Activated naive CD4-positive, alpha-beta T cell treated with anti-CD3 and anti-CD28 coated beads, Interleukin-2, amount 10 ng/mL, durations not matched to agents 7 days and 5 days (primary cell): ENCODE measurements at regions of chr11 and their contacts with region 1.

Region 1: DNA sequence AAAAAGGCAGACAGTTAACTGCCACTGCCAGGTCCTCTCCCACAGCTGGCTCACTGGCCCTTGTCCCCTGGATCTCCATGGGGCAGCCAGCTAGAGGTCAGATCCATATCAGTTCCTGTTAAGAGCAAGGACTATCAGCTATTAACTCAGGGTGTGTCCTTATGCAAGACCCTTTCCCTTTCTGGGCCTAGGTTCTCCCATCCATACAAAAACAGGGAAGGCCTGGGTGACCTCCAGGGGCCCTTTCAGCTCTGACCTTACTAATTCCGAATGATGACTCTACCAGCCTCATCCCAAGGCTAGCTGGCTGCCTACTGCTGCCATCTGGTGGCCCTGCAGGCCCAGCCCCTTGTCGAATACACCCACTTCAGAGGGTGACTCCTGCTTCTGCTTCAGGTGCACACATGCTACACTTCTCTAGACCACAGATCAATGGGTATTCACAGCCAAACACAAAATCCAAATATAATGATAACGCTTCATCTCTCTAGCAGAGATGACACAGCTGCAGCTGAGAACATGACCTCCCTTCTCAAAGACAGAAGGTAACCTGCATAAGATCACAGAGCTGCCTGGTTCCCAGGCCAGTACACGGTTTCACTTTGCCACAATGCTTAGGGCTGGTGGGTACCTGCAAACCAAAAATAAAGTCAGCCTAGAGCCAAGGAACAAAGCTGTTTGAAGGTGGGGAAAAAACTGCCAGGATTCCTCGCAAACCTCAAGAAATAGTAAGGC is 34.1 kb downstream of the SERGEF start:
- DNase-seq: peak; percentile 50
- H3K4me3 Mint-ChIP-seq: no peak overlapping the region
- H3K27ac Mint-ChIP-seq: no peak overlapping the region
- H3K4me1 Mint-ChIP-seq: no peaks in the 10 kb centered on the region
- H3K27me3 Mint-ChIP-seq: no peaks in the 10 kb centered on the region

Region 2: DNA sequence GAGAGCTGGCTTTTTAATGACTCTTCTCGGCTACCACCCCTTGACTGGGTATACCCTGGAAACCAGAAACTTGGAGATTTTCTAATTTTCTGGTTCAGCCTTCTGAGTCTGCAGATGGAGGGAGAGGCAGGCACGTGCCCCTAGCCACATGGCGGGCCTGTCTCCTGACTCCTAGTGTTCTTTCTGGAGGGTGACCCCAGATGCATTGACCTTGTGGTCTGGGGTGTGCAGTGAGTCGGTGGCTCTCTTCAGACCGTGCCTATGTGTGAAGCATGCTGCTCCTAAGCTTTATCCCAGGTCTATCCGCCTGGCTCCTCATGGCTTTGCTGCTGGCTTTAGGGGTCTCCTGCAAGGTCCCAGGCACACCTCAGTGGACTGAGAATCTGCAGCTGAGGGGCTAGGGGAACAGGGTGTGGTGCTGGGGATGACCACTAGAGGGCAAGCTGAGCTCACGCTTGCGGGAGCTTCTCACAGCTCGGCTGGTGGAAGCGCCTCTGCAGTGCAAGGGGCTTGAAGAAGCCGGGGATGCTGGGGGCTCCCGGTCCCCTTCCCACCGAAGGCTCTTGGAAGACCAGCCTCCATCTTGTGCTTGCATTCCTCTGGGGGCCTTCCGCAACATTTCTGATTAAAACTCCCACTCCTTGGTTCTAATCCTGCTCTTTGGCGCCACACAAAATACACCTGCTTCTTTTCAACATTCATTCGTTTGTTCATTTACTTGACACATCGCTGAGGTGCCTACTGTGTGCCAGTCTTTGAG is 379.8 kb before region 1 on chr11:
- CTCF ChIA-PET with region 1: interaction called, 17 read pairs
- DNase-seq: peak; percentile 80
- H3K4me3 Mint-ChIP-seq: no peak overlapping the region
- H3K27ac Mint-ChIP-seq: no peak overlapping the region
- H3K4me1 Mint-ChIP-seq: no peaks in the 10 kb centered on the region
- H3K27me3 Mint-ChIP-seq: peaks cover 35% of the 10 kb centered on the region

Region 3: DNA sequence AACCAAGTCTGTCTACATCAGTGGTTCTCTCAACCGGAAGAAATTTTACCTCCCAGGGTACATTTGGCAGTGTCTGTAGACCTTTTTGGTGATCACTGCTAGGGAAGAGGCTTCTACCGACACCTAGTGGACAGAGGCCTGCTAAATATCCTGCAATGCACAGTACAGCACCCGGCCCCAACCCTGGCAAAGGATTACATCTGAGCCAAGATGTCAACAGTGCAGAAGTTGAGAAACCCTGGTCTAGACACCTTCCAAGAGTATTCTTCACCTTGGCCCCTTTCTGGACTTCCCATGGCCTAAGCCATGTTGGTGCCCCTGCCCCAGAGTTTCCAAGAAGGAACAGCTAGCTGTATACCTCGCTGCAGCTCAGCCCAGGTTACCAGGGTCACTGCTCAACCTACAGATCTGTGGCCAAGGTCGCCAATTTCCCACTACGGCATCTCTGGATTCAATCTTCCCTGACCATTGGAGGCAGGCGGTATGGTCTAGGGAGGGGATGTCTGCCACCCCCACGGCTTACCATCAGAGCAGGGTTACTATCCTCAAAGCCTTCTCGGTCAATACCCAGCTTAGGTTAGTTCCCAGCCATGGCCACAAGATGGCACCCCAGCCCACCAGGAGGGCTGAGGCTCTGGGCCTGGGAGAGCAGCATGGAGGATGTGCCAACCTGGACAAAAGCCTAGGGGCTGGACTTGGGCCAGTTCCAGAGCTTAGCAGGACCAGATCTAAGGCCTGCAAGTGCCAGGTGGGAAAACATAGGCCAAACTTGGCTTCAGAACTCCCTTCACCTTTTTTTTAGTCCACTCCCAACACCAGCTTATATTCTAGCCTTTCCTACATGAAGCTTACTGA is 247.9 kb before region 1 on chr11:
- CTCF ChIA-PET with region 1: interaction called, 84 read pairs
- DNase-seq: peak; percentile 76
- H3K4me3 Mint-ChIP-seq: no peak overlapping the region
- H3K27ac Mint-ChIP-seq: no peak overlapping the region
- H3K4me1 Mint-ChIP-seq: peaks cover 7% of the 10 kb centered on the region
- H3K27me3 Mint-ChIP-seq: peaks cover 47% of the 10 kb centered on the region

Region 4: DNA sequence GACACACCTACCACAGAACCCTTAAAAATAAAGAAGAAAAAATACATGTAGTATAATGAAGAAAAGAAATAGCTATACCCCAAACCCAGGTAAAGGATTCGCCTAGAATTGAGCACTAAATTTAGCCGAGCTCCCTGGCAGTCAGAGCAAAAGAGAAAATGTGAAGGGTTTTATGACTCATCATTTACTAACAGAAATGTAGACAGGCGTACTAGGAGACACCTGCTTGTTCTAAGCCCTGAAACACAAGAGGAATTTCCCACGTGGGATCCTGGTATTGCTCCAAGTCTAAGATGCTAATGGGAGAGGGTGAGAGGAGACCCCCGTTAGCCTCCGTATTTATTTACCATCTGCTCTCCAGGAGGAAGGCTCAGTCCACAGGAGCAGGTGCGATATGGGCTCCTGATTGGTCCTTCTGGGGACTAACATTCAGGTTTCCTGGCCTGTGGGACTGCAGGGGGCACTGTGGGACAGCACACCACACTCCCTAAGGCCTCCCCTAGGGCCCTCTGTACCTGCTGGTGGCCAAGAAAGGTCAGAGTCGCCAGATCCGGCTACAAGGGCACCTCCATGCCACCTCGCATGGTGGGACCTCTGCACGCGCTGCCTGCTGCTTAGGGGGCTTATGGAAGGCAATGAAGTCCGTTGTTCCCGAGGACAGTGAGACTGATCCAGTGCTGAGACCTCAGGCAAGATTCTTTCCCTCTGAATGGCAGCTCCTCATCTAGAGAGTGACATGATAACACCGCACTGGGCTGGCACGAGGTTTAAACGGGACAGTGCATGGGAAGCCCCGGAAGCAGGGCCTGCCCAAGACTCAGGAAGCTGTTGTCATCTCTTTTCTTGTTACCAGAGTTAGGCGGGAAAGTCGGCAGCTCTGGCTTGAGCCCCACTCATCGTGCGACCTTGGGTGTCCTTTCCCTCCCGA is 218.4 kb before region 1 on chr11:
- CTCF ChIA-PET with region 1: interaction called, 10 read pairs
- DNase-seq: peak; percentile 51
- H3K4me3 Mint-ChIP-seq: no peak overlapping the region
- H3K27ac Mint-ChIP-seq: no peak overlapping the region
- H3K4me1 Mint-ChIP-seq: no peaks in the 10 kb centered on the region
- H3K27me3 Mint-ChIP-seq: peaks cover 9% of the 10 kb centered on the region

Region 5: GRCh38 chr11:17894929-17895658 is 83.6 kb before region 1 on chr11:
- CTCF ChIA-PET with region 1: no interaction called
- DNase-seq: no peak
- H3K4me3 Mint-ChIP-seq: no peak overlapping the region
- H3K27ac Mint-ChIP-seq: no peak overlapping the region
- H3K4me1 Mint-ChIP-seq: no peaks in the 10 kb centered on the region
- H3K27me3 Mint-ChIP-seq: no peaks in the 10 kb centered on the region

Region 6: GRCh38 chr11:17991783-17992433 is 13.2 kb after region 1 on chr11:
- CTCF ChIA-PET with region 1: interaction called, 16 read pairs
- DNase-seq: peak; percentile 66
- H3K4me3 Mint-ChIP-seq: no peak overlapping the region
- H3K27ac Mint-ChIP-seq: no peak overlapping the region
- H3K4me1 Mint-ChIP-seq: no peaks in the 10 kb centered on the region
- H3K27me3 Mint-ChIP-seq: no peaks in the 10 kb centered on the region

Region 7: DNA sequence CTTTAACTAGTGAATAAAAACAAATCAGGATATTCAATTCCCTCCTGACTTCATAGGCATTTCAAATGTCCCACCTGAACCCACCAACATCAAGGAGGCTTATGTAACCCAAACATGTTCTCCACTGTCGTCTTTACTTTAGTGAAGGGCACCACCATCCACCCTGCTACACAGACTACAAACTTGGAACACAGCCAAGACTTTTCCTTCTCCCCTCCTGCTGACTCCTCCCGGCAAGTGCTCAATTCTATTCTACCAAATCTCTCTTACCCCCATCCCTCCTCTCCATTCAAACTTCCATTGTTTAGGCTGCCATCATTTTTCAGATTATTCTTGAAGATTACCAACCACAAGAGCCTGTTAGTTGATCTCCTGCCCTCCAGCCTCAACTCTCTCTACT is 102.8 kb after region 1 on chr11:
- CTCF ChIA-PET with region 1: no interaction called
- DNase-seq: no peak
- H3K4me3 Mint-ChIP-seq: no peak overlapping the region
- H3K27ac Mint-ChIP-seq: no peak overlapping the region
- H3K4me1 Mint-ChIP-seq: no peaks in the 10 kb centered on the region
- H3K27me3 Mint-ChIP-seq: no peaks in the 10 kb centered on the region

Region 8: DNA sequence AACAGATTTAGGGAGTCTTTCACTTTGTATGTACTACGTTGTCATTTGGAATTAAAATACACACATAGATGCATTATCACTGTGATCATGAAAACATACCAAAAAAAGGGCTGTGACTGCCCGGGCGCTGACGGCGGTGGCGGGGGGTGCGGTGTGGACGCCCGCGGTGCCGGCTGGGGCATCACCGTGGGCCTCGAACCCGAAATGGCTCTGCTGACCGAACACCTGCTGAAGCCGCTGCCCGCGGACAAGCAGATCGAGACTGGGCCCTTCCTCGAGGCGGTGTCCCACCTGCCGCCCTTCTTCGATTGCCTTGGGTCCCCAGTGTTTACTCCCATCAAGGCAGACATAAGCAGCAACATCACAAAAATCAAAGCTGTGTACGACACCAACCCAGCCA is 210.1 kb after region 1 on chr11:
- CTCF ChIA-PET with region 1: no interaction called
- DNase-seq: no peak
- H3K4me3 Mint-ChIP-seq: no peak overlapping the region
- H3K27ac Mint-ChIP-seq: no peak overlapping the region
- H3K4me1 Mint-ChIP-seq: no peaks in the 10 kb centered on the region
- H3K27me3 Mint-ChIP-seq: peaks cover 12% of the 10 kb centered on the region